ENCODE measurements at regions of chrX and their contacts with region 1.

Region 1: DNA sequence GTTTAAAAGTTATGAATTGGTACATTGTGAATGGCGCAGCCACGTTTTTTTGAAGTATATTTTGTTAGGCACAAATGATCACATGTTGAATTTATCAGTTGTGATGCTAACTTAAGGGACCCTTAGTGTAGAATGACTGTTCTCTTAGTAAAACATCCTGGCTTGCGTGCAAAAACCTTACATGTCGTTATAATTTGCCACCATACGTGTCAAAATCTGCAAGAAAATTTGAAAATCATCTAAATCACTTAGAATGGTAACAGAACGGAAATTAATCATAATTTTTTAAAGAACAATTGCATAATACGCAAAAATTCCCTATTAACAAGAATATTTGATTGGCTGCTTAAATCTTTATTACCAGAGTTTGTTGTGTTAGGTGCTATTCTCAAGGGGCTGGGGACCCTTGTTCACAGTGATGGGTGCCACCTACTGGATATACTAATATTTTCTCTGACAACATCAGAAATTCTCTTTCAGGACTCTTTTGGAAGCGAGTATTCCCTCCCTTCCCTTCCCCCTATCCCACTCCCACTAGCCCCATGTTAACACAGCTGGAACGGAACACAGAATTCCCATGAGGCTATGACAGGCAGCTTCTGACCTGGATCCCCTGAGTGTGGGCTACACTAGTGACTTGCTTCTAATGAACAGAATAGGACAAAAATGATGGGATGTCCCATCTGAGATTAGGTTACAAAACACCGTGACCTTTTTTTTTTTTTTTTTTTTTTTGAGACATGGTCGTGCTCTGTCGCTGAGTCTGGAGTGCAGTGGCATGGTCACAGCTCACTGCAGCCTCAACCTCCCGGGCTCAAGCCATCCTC is 71.8 kb downstream of the SUPT20HL2 start:
- DNase-seq: no peak
- H3K4me3 ChIP-seq: no peak overlapping the region
- CTCF ChIP-seq: no peak

Region 2: DNA sequence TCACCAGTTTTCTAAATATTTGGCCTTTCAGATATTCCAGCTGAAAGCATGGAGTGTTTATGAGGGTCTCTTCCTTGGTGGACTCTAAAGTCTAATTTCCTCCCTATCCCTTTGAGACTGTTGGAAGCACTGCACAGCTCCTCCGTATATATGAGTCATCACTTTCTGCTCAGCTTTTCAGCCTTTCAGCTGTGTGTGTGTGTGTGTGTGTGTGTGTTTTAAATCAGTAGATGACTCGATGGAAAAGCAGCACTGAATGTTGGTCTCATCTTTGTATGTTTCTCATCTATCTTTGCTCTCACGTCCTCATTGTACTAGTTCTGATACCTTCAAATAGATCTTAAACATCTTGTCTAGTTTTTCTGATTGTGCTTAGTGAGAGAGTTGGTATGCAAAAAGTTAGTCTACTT is 10.9 kb before region 1 on chrX:
- CTCF ChIA-PET with region 1: interaction called, 11 read pairs
- POLR2A ChIA-PET with region 1: no interaction called
- DNase-seq: peak; percentile 38
- H3K4me3 ChIP-seq: no peak overlapping the region
- CTCF ChIP-seq: no peak

Region 3: GRCh38 chrX:24990535-24990934 is 748.5 kb after region 1 on chrX:
- CTCF ChIA-PET with region 1: no interaction called
- POLR2A ChIA-PET with region 1: no interaction called
- DNase-seq: no peak
- H3K4me3 ChIP-seq: no peak overlapping the region
- CTCF ChIP-seq: no peak